ENCODE measurements at regions of chr19 and their contacts with region 1.

Region 1: DNA sequence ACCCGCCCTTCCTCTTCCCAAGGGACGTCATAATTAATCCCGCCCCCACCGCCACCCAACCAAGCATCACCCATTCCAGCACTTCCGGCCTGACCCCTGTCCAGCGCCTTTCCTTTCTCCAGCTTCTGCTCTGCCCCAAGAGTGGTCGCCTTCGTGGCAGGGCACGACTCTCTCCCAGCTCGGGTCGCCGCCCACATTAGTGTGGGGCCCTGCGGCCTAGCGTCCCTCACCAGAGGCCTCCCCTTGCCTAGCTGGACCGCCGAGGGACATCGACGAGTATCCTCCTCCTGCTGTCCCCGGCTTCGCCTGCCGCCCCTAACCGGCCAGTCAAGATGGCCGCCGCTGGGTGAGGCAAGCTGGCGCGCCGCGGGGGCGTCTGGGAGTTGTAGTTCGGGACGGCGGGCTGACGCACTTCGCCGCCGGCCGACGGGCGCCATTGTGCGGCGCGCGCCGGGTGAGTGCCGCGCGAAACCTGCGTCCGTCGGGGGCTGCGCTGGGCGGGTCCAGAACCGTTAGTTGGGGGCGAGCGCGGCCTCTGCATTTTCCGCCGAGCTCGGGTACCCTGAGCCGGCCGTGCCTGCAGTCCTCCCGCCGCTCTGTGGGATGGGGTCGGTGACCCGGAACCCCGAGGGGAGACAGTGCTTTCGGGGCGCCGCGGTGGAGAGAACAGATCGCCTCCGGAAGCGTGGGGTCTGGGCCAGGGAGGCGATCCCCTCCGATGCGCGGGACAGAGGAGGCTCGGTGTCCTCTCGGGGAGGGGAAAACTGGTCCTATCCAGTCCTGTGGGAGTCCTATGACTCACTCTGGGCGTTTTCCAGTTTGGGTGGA is at the start of gene ZNF274:
- DNase-seq: peak; percentile 90
- H3K4me3 Mint-ChIP-seq: peak within 1 kb of the TSS; percentile 93
- H3K27ac Mint-ChIP-seq: peak within 1 kb of the TSS; percentile 99
- H3K4me1 Mint-ChIP-seq: peaks cover 16% of the 10 kb centered on the region
- H3K27me3 Mint-ChIP-seq: no peaks in the 10 kb centered on the region
- total RNA-seq, gene ZNF274: 18.2 and 21.2 TPM in 2 replicates

Region 2: DNA sequence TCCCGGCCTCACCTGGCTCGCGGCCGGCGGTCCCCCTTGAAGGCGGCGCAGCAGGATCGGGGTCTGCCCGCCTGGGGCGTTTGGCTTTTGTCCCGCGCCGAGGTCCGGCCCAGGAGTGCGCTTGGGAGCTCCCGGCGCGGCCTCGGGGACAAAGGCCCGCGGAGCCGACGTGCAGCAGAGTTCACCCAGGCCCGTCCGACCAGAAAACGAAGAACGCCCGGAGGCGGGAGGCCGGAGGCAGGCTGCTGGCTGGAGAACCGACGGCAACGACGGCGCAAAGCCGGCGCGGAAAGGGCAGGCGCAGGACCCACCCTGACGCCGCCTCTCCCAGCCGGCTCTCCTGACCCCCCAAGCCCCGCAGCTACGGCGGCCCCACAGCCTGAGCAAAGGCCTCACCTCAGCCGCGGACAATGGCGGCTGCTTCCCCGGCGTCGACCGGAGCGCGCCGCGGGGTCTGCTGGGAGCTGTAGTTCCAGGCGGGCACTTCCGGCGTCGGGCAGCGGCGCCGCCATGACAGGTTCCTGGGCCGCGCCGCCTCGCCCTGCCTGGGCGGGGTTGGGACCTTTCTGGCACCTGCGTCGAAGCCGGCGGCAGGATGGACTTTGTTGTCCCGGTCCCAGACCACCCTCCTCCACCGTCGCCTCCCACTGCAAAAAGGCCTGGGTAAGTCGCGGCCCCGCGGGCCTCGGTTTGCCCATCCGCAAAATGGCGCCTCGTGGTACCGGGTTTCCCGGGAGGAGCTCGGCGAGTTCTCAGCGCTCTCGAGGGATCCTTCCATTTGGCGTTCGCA is 180.6 kb before region 1 on chr19 and contains the start of gene ZNF606:
- intact Hi-C with region 1: loop called (anchors 10 kb)
- DNase-seq: peak; percentile 80
- H3K4me3 Mint-ChIP-seq: peak within 1 kb of the TSS; percentile 84
- H3K27ac Mint-ChIP-seq: peak within 1 kb of the TSS; percentile 67
- H3K4me1 Mint-ChIP-seq: peaks cover 20% of the 10 kb centered on the region
- H3K27me3 Mint-ChIP-seq: no peaks in the 10 kb centered on the region
- total RNA-seq, gene ZNF606: 6.3 and 6.4 TPM in 2 replicates

Region 3: DNA sequence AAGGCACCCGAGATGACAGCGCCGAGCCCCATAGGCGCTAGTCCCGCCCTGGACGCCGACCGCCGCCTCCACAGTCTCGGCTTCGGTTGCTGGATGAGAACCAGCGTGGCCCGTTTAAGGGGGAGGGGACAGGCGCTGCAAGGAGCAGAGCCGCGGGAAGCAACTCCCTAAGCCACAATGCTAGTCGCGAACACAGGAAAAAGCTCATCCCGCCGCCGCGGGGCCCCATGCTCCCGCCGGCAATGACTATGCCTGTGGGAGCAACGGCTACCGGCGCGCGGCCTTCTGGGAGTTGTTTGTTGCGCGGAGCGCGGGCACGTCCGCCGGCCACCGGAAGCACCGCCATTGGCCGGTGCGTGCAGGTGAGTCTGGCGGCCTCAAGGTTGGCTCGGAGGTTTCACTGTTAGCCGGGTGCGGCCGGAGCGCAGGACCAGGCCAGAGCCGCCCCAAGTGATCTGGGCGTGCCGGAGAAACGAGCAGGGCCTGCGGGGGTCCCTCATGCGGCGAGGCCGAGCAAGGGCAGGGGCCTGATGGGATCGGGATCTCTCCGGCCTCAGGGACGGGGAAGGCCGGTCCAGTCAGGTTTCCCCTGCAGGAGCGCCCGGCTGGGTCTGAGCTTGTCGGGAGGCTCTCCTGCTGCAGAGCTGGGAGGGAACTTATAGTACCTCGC is 45.5 kb after region 1 on chr19 and contains the start of gene ZNF544:
- intact Hi-C with region 1: loop called (anchors 5 kb)
- DNase-seq: peak; percentile 60
- H3K4me3 Mint-ChIP-seq: peak within 1 kb of the TSS; percentile 89
- H3K27ac Mint-ChIP-seq: peak within 1 kb of the TSS; percentile 96
- H3K4me1 Mint-ChIP-seq: peaks cover 32% of the 10 kb centered on the region
- H3K27me3 Mint-ChIP-seq: no peaks in the 10 kb centered on the region
- total RNA-seq, gene ZNF544: 51.8 and 56.1 TPM in 2 replicates

Region 4: DNA sequence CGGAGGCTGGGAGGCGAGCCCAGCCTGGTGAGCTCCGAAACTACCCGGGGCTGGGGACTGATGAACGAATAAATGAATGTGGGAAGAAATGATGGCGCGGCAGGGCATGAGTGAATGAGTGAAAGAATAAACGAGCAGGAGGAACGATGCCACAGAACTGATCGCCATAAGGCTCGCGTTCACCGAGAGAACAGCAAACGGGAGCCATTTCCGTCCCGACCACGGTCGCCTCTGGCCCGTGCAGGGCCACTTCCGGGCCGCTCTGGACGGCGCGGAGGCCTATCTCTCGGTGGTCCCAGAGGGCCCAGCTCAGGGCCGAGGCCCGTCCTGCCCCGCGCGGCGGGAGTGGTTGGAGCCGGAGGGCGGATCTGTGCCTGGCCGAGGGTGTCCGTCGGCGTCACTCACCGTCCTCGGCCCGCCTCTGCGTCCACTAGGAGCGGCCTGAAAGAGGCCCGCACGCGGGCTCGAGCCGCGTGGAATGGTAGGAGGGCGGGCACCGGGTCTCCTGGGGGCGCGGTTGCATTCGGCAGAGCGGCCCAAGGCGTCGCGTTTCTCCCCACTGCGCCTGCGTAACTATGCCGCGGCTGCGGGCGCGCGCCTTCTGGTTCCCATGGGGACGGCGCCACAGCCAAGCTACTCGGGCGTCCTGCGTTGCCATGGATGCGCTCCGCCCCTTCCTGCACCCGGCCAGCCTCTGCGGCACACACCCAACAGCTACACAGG is 179.2 kb after region 1 on chr19 and contains the start of gene ZNF497:
- intact Hi-C with region 1: loop called (anchors 1 kb)
- DNase-seq: peak; percentile 95
- H3K4me3 Mint-ChIP-seq: peak within 1 kb of the TSS; percentile 94
- H3K27ac Mint-ChIP-seq: peak within 1 kb of the TSS; percentile 95
- H3K4me1 Mint-ChIP-seq: peaks cover 7% of the 10 kb centered on the region
- H3K27me3 Mint-ChIP-seq: no peaks in the 10 kb centered on the region
- total RNA-seq, gene ZNF497: 0.76 and 0.93 TPM in 2 replicates

Region 5: GRCh38 chr19:58416604-58417003 is 233.4 kb after region 1 on chr19:
- intact Hi-C with region 1: no loop called
- DNase-seq: no peak
- H3K4me3 Mint-ChIP-seq: no peak overlapping the region
- H3K27ac Mint-ChIP-seq: no peak overlapping the region
- H3K4me1 Mint-ChIP-seq: no peaks in the 10 kb centered on the region
- H3K27me3 Mint-ChIP-seq: no peaks in the 10 kb centered on the region

Region 6: GRCh38 chr19:58499021-58499927 is 316.1 kb after region 1 on chr19:
- intact Hi-C with region 1: loop called (anchors 2 kb)
- DNase-seq: peak; percentile 96
- H3K4me3 Mint-ChIP-seq: peak overlapping the region; percentile 91
- H3K27ac Mint-ChIP-seq: peak overlapping the region; percentile 91
- H3K4me1 Mint-ChIP-seq: peaks cover 21% of the 10 kb centered on the region
- H3K27me3 Mint-ChIP-seq: peaks cover 7% of the 10 kb centered on the region